ENCODE measurements at regions of chr15 and their contacts with region 1.

Region 1: GRCh38 chr15:42920519-42921227 is at the start of gene TTBK2:
- DNase-seq: peak; percentile 99
- H3K4me3 ChIP-seq: peak within 1 kb of the TSS; percentile 82
- H3K27ac ChIP-seq: peak within 1 kb of the TSS; percentile 52
- H3K4me1 ChIP-seq: peaks cover 13% of the 10 kb centered on the region
- H3K27me3 ChIP-seq: no peaks in the 10 kb centered on the region
- total RNA-seq, gene TTBK2: 6.3 and 7.6 TPM in 2 replicates

Region 2: GRCh38 chr15:42716626-42717025 is 204.0 kb before region 1 on chr15:
- in situ Hi-C with region 1: loop called (anchors 10 kb)
- DNase-seq: peak; percentile 34
- H3K4me3 ChIP-seq: no peak overlapping the region
- H3K27ac ChIP-seq: no peak overlapping the region
- H3K4me1 ChIP-seq: 0 out of 2 replicates have a peak, but pooled peaks cover 4% of the 10 kb centered on the region
- H3K27me3 ChIP-seq: no peaks in the 10 kb centered on the region

Region 3: DNA sequence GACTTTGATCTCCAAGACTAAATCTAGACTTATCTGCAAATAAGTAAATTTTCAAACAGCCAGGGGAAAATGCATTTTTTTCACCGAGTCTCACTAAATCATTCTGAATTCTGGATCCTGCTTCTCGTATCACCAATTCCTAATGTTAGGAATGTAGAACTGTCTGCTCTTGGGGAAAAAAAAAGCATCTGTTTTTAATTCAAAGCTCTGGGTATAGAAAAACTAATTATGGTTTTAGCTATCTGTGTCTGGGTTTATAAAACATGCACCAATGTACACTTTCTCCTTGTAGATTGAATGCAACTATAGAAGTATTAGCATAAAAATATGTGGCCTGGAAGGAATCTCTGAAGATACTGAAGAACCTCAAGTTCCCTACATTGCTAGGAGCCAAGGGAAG is 179.0 kb before region 1 on chr15:
- in situ Hi-C with region 1: no loop called
- DNase-seq: no peak
- H3K4me3 ChIP-seq: no peak overlapping the region
- H3K27ac ChIP-seq: no peak overlapping the region
- H3K4me1 ChIP-seq: peaks cover 3% of the 10 kb centered on the region; the same call in 1 of the 2 replicates
- H3K27me3 ChIP-seq: no peaks in the 10 kb centered on the region